ENCODE measurements at regions of chr3 and their contacts with region 1.

Region 1: DNA sequence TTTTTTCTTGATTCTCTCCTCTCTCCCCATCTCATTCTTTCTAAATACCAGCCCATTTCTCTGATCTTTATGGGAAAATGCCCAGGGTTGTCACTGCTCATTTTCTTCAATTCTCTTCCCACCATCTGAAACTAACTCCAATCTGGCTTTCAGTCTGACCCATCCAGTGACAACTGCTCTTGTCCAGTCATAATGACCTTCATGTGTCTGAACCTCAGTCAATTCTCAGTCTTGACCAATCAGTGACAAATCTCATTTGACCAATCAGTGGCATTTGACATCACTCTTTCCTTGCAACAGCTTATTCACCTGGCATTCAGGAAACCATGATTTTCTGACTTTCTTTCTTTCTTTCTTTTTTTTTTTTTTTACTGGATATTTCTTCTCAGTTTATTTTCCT is 15.1 kb downstream of the VEPH1 start:
- DNase-seq: no peak
- ATAC-seq: no peak
- H3K4me3 ChIP-seq: no peak overlapping the region
- H3K27ac ChIP-seq: no peak overlapping the region
- H3K4me1 ChIP-seq: no peaks in the 10 kb centered on the region
- H3K27me3 ChIP-seq: no peaks in the 10 kb centered on the region; the same call in 1 of the 2 replicates
- CTCF ChIP-seq: no peak

Region 2: GRCh38 chr3:157460253-157460652 is 27.9 kb before region 1 on chr3:
- CTCF ChIA-PET with region 1: no interaction called
- POLR2A ChIA-PET with region 1: interaction called, 12 read pairs
- in situ Hi-C with region 1: no loop called
- intact Hi-C with region 1: no loop called
- DNase-seq: no peak
- ATAC-seq: no peak
- H3K4me3 ChIP-seq: no peak overlapping the region
- H3K27ac ChIP-seq: no peak overlapping the region
- H3K4me1 ChIP-seq: no peaks in the 10 kb centered on the region
- H3K27me3 ChIP-seq: no peaks in the 10 kb centered on the region
- CTCF ChIP-seq: no peak

Region 3: DNA sequence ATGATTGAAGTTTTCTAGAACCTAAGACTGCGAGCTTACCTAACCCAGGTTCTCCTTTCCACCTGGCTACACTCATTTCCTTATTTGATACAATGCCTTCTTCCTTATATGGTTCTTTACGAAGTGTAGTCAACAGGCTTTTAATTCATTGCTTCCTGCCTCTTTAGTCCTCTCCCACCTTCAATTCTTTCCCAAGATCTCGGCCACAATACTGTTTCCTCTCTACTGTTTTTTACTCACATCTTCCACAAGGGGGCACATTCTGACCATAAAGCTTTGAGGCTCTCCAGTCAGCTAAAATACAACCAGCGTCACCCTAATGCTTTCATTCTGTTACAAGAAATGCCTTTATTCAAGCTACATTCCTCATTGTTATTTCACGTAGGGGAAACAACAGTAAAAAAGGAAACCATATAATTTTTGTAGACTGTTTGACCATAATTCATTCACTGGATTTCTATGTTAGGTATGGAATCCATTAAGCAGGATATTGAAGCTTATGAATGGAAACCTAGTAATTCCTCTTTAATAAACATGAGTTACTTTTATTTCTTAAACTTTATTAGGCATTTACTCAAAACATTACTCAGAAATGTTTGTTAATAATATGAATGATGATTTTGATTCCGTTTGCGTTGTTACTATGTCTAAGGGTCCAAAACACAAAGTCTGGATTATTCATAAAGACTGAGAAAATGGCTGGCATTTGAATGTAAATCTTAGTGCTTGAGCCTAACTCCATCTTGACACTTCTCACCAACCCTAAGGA is 44.6 kb after region 1 on chr3:
- CTCF ChIA-PET with region 1: no interaction called
- POLR2A ChIA-PET with region 1: no interaction called
- in situ Hi-C with region 1: no loop called
- intact Hi-C with region 1: no loop called
- DNase-seq: peak; percentile 42
- ATAC-seq: peak; percentile 94
- H3K4me3 ChIP-seq: no peak overlapping the region
- H3K27ac ChIP-seq: no peak overlapping the region
- H3K4me1 ChIP-seq: no peaks in the 10 kb centered on the region
- H3K27me3 ChIP-seq: no peaks in the 10 kb centered on the region; the same call in 1 of the 2 replicates
- CTCF ChIP-seq: peak; percentile 82

Measured in Panc1 (cell line).